Ascending aorta (tissue), 2 donors: ENCODE measurements at regions of chr22 and their contacts with region 1.

Region 1: GRCh38 chr22:40679964-40680818 is 907 bp downstream of the MCHR1 start:
- DNase-seq: no peak
- H3K4me3 ChIP-seq: peak overlapping the region in 1 of 2 donors; percentile 55
- H3K27ac ChIP-seq: no peak overlapping the region
- H3K4me1 ChIP-seq: peaks cover 0 to 17% of the 10 kb centered on the region in 2 donors
- H3K27me3 ChIP-seq: no peaks in the 10 kb centered on the region
- CTCF ChIP-seq: no peak

Region 2: DNA sequence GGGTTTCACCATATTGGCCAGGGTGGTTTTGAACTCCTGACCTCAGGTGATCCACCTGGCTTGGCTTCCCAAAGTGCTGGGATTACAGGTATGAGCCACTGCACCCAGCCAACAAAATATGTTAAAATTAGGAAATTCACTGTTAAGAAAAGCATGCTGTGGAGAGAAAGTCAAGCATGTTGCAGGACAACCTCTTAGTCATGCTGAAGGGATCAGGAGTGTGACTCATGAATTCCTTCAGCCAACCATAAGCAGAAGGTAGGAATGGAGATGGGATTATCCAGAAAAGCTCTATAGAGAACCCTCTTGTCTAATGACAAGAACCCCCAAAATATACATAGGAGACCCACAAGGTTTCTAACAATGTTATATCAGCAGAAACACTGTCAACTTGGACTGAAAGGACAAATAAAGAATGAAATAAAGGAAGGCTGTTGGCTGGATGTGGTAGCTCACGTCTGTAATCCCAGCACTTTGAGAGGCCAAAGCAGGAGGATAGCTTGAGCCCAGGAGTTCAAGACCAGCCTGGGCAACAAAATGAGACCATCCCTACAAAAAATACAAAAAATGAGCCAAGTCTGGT is 59.6 kb before region 1 on chr22:
- intact Hi-C with region 1: no loop called
- DNase-seq: no peak
- H3K4me3 ChIP-seq: no peak overlapping the region
- H3K27ac ChIP-seq: no peak overlapping the region
- H3K4me1 ChIP-seq: no peaks in the 10 kb centered on the region
- H3K27me3 ChIP-seq: no peaks in the 10 kb centered on the region
- CTCF ChIP-seq: no peak

Region 3: GRCh38 chr22:40666151-40666848 is 13.9 kb before region 1 on chr22:
- intact Hi-C with region 1: no loop called
- DNase-seq: no peak
- H3K4me3 ChIP-seq: no peak overlapping the region
- H3K27ac ChIP-seq: peak overlapping the region; percentile 86 to 92
- H3K4me1 ChIP-seq: peaks cover 7 to 18% of the 10 kb centered on the region in 2 donors
- H3K27me3 ChIP-seq: no peaks in the 10 kb centered on the region
- CTCF ChIP-seq: no peak

Region 4: GRCh38 chr22:40705918-40706682 is 25.9 kb after region 1 on chr22:
- intact Hi-C with region 1: loop called (anchors 2 kb)
- DNase-seq: no peak
- H3K4me3 ChIP-seq: no peak overlapping the region
- H3K27ac ChIP-seq: no peak overlapping the region
- H3K4me1 ChIP-seq: peaks cover 9 to 10% of the 10 kb centered on the region in 2 donors
- H3K27me3 ChIP-seq: no peaks in the 10 kb centered on the region
- CTCF ChIP-seq: no peak

Region 5: GRCh38 chr22:40764763-40765441 is 84.7 kb after region 1 on chr22:
- intact Hi-C with region 1: loop called (anchors 1 kb)
- DNase-seq: no peak
- H3K4me3 ChIP-seq: no peak overlapping the region
- H3K27ac ChIP-seq: no peak overlapping the region
- H3K4me1 ChIP-seq: no peaks in the 10 kb centered on the region
- H3K27me3 ChIP-seq: no peaks in the 10 kb centered on the region
- CTCF ChIP-seq: no peak